ENCODE measurements at regions of chr4 and their contacts with region 1.

Region 1: GRCh38 chr4:153573881-153574802 is 108.0 kb downstream of the TMEM131L start:
- DNase-seq: peak; percentile 76 to 81
- ATAC-seq: peak; percentile 85
- H3K4me3 ChIP-seq: no peak overlapping the region
- H3K27ac ChIP-seq: no peak overlapping the region
- H3K4me1 ChIP-seq: peaks cover under 1 to 6% of the 10 kb centered on the region in 2 donors
- H3K27me3 ChIP-seq: no peaks in the 10 kb centered on the region

Region 2: GRCh38 chr4:153142700-153143438 is 431.3 kb before region 1 on chr4:
- intact Hi-C with region 1: loop called (anchors 5 to 10 kb)
- DNase-seq: peak; percentile 84 to 90
- ATAC-seq: peak; percentile 81
- H3K4me3 ChIP-seq: peak overlapping the region in 1 of 2 donors; percentile 11
- H3K27ac ChIP-seq: no peak overlapping the region
- H3K4me1 ChIP-seq: no peaks in the 10 kb centered on the region
- H3K27me3 ChIP-seq: no peaks in the 10 kb centered on the region

Region 3: DNA sequence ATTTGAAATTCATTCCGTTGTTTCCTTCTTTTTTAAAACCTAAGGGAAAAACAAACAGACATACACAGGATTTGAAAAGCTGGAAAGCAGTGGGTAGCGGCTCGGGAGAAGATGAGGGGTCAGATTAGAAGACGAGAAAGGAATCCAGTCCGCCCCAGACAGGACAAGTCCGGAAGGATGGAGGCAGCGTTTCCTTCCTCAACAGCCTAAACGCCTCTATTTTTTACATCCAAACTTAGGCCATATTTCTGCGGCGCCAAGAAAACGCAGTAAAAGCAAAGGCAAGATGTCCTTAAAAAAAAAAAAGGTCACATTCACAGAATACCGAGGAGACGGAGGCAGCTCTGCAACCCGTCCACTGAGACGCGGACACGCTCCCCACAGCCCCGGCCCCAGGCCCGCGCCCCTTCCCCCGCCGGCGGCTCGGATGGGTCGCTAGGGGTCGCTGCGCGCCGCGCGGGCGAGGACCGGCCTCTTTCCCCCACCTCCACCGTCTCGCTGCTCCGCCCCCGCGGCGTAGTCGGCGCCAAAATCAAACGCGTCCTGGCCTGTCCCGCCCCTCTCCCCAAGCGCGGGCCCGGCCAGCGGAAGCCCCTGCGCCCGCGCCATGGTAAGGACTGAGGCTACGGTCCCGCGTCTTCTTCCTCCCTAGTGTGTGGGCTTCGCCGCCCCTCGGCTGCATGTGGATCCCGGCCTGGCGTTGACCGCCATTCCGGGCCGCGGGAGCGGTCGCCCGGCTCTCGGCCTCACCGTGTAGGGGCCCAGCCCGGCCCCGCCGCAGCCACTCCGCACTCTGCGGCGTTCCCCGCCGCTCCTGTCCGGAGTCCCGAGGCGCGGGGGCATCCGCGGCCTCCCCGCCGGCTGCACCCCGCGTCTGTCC is 229.8 kb before region 1 on chr4 and contains the start of gene MND1:
- intact Hi-C with region 1: loop called (anchors 1 kb)
- DNase-seq: peak; percentile 90 to 97
- ATAC-seq: peak; percentile 97
- H3K4me3 ChIP-seq: peak within 1 kb of the TSS; percentile 71 to 93
- H3K27ac ChIP-seq: no peak within 1 kb of the TSS
- H3K4me1 ChIP-seq: no peaks in the 10 kb centered on the region
- H3K27me3 ChIP-seq: no peaks in the 10 kb centered on the region
- total RNA-seq, gene MND1: 0.81 to 1.3 TPM

Region 4: DNA sequence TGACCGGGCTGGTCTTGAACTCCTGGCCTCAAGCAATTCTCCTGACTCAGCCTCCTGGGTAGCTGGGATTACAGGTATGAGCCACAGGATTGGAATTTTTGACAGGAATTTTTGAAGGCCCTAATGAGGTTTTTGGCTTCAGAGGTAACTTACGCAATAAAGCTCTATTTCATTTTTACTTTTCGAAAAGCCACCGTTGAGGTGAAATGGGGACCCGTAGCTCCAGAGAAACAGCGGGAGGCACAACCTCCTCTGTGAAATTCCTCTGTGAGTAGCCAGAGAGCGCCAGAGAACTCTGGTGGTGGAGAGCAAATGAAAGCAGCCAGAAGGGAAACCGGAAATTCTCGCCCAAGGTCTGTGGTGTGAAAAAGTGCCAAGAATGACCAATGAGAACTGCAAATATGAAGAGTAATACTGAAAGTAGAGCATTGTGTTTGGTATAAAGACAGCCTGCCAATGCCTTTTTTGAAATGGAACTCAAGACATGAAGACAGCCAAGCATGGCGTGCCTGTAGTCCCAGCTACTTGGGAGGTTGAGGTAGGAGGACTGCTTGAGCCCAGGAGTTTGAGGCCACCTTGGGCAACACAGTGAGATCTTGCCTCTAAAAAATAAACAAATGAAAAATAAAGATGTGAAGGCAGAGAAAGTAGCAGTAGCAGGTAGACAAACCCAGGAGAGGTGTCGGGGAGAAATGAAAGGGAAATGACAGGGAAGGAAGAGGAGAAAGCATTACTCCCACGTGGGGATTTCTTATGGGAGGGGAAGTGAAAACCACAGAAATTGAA is 141.0 kb before region 1 on chr4:
- intact Hi-C with region 1: loop called in 1 of 2 experiments (anchors 2 kb)
- DNase-seq: peak in 1 of 2 donors; percentile 78
- ATAC-seq: peak; percentile 74
- H3K4me3 ChIP-seq: no peak overlapping the region
- H3K27ac ChIP-seq: no peak overlapping the region
- H3K4me1 ChIP-seq: no peaks in the 10 kb centered on the region
- H3K27me3 ChIP-seq: no peaks in the 10 kb centered on the region

Region 5: GRCh38 chr4:153466081-153466948 is 107.8 kb before region 1 on chr4 and contains the start of gene TMEM131L:
- intact Hi-C with region 1: loop called (anchors 2 to 5 kb)
- DNase-seq: peak; percentile 74 to 89
- ATAC-seq: peak; percentile 91
- H3K4me3 ChIP-seq: peak within 1 kb of the TSS; percentile 78 to 86
- H3K27ac ChIP-seq: peak within 1 kb of the TSS in 1 of 2 donors; percentile 55
- H3K4me1 ChIP-seq: no peaks in the 10 kb centered on the region
- H3K27me3 ChIP-seq: no peaks in the 10 kb centered on the region
- total RNA-seq, gene TMEM131L: 20.1 to 22.5 TPM

Region 6: GRCh38 chr4:153488006-153488891 is 85.9 kb before region 1 on chr4:
- intact Hi-C with region 1: loop called in 1 of 2 experiments (anchors 5 kb)
- DNase-seq: peak in 1 of 2 donors; percentile 62
- ATAC-seq: peak; percentile 67
- H3K4me3 ChIP-seq: no peak overlapping the region
- H3K27ac ChIP-seq: peak overlapping the region; percentile 36 to 80
- H3K4me1 ChIP-seq: peaks cover 0 to 6% of the 10 kb centered on the region in 2 donors
- H3K27me3 ChIP-seq: no peaks in the 10 kb centered on the region

Region 7: GRCh38 chr4:153514001-153514526 is 60.1 kb before region 1 on chr4:
- intact Hi-C with region 1: loop called in 1 of 2 experiments (anchors 5 kb)
- DNase-seq: no peak
- ATAC-seq: peak; percentile 42
- H3K4me3 ChIP-seq: no peak overlapping the region
- H3K27ac ChIP-seq: peak overlapping the region in 1 of 2 donors; percentile 59
- H3K4me1 ChIP-seq: peaks cover 3 to 10% of the 10 kb centered on the region in 2 donors
- H3K27me3 ChIP-seq: no peaks in the 10 kb centered on the region